Heart right ventricle (tissue), 16 donors: ENCODE measurements at regions of chr1 and their contacts with region 1.

Region 1: DNA sequence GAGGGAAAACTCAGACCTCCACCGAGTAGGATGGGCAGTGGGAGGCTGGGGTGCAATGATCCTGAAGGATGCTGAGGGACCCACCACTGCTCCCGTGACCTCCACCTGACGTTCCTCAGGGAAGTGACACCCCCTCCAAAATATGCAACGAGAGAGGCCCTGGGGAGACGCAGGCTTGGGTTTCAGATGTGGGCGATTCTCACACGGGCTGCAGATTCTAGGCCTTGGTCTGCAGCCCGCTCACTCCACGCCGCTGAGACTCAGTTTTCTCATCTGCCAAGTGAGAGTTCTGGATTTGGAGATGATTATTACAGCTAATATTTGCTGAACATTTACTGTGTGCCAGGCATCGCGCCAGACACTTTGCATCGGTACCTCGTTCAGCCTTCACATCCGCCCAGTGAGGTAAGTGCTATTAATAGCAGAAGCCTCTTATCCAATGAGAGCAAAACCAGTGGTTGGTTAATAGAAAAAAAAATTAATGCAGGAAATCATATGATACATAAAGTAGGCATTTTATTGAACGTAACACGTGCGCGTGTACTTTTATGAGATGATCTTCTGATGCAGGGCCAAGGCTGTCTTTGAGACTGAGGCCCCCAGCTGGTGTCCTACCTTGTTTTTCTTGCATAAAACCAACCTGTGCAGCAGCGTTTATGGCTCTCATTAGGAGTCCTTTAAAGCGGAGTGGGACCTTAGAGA is 102.0 kb upstream of the RUNX3 start:
- DNase-seq: peak; percentile 35 to 47
- ATAC-seq: peak in 5 of 8 donors; percentile 41 to 79 (median 73)
- H3K4me3 ChIP-seq: no peak overlapping the region
- H3K27ac ChIP-seq: peak overlapping the region in 1 of 10 donors; percentile 83
- H3K4me1 ChIP-seq: peaks cover 0 to 80% (median 0%) of the 10 kb centered on the region in 9 donors
- H3K27me3 ChIP-seq: peaks cover 0 to 25% (median 5%) of the 10 kb centered on the region in 7 donors
- CTCF ChIP-seq: no peak

Region 2: GRCh38 chr1:25080294-25081209 is 48.4 kb after region 1 on chr1:
- intact Hi-C with region 1: no loop called
- DNase-seq: no peak
- ATAC-seq: no peak
- H3K4me3 ChIP-seq: no peak overlapping the region
- H3K27ac ChIP-seq: no peak overlapping the region
- H3K4me1 ChIP-seq: no peaks in the 10 kb centered on the region
- H3K27me3 ChIP-seq: peaks cover 0 to 13% (median 0%) of the 10 kb centered on the region in 7 donors
- CTCF ChIP-seq: no peak

Region 3: DNA sequence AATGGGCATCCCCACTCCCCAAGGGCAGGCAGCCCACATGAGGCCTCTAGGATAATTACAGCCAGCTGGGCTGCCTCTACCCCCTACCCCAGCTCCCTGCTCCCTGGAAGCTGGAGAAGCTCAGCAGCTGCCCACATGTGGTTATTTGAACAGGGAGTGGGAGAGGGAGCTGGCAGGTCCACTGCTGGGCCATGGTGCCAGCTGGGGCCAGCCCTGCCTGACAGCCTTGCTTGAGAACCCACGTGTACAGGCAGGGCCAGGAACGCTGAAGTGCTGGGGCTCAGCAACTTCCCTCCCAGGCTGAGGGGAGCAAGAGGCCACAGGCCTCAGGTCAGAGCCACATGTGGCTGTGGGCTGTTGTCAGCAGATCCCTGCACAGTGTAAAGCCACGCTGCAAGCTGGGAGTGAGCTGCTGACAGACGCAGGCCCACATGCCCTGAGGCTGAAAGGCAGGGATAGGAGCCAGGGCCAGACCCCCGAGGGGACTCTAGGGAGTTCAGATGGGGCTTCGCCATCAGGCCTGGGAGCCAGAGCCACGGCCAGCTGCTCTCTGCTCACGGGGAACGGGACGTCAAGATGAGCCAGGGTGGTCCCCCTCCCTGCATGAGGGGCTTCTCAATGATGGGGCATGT is 71.2 kb after region 1 on chr1:
- intact Hi-C with region 1: loop called in 1 of 10 experiments (anchors 5 kb)
- DNase-seq: no peak
- ATAC-seq: peak in 2 of 8 donors; percentile 21 to 23
- H3K4me3 ChIP-seq: no peak overlapping the region
- H3K27ac ChIP-seq: no peak overlapping the region
- H3K4me1 ChIP-seq: peaks cover 0 to 19% (median 0%) of the 10 kb centered on the region in 9 donors
- H3K27me3 ChIP-seq: peaks cover 0 to 21% (median 10%) of the 10 kb centered on the region in 7 donors
- CTCF ChIP-seq: no peak